Psoas muscle (tissue), 8 donors: ENCODE measurements at regions of chr7 and their contacts with region 1.

Region 1: DNA sequence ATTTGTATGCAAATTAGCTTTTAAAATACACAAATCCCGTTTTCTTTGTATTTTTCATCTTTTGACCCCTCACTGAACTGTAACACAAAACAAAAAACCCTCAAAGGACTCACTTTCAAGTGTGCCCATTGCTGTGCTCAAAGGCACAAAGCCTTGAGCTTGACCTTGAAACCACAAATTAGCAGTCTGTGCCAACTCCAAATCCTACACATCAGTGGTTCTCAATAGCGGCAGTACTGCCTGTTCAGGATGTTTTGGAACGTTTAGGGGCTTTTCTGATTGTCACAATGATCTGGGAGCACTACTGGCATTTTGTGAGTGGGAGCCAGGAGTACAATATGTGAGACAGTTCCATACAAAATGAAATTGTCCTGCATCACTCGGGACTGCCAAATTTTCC is 55.5 kb downstream of the KDM7A start:
- DNase-seq: no peak
- ATAC-seq: no peak
- H3K4me3 ChIP-seq: no peak overlapping the region
- H3K27ac ChIP-seq: no peak overlapping the region
- H3K4me1 ChIP-seq: no peaks in the 10 kb centered on the region
- H3K27me3 ChIP-seq: no peaks in the 10 kb centered on the region
- CTCF ChIP-seq: no peak

Region 2: DNA sequence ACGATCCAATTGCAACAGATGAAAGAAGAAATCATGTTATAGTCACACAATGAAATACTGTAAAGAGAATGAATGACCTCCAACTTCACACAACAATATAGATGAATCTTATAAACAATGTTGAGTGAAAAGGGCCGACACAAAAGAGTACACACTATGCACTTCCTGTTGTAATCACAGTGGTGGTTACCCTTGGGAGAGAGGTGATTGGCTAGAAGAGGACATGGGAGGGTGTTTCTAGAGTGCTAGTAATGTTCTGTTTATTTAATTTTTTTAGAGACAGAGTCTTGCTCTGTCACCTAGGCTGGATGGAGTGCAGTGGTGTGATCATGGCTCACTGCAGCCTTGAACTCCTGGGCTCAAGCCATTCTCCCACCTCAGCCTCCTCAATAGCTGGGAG is 657.6 kb after region 1 on chr7:
- intact Hi-C with region 1: loop called in 1 of 2 experiments (anchors 5 kb)
- DNase-seq: no peak
- ATAC-seq: no peak
- H3K4me3 ChIP-seq: no peak overlapping the region
- H3K27ac ChIP-seq: no peak overlapping the region
- H3K4me1 ChIP-seq: no peaks in the 10 kb centered on the region
- H3K27me3 ChIP-seq: no peaks in the 10 kb centered on the region
- CTCF ChIP-seq: no peak